ENCODE measurements at regions of chr21 and their contacts with region 1.

Region 1: GRCh38 chr21:25790122-25790877 is 55.5 kb downstream of the GABPA start:
- DNase-seq: peak; percentile 63
- H3K4me3 ChIP-seq: peak overlapping the region in 2 of 3 experiments; percentile 27 to 28
- H3K27ac ChIP-seq: no peak overlapping the region
- H3K4me1 ChIP-seq: no peaks in the 10 kb centered on the region
- H3K27me3 ChIP-seq: peaks cover 2 to 3% of the 10 kb centered on the region in 2 experiments
- CTCF ChIP-seq: peak; percentile 22 to 26
- POLR2A ChIP-seq: no peak

Region 2: DNA sequence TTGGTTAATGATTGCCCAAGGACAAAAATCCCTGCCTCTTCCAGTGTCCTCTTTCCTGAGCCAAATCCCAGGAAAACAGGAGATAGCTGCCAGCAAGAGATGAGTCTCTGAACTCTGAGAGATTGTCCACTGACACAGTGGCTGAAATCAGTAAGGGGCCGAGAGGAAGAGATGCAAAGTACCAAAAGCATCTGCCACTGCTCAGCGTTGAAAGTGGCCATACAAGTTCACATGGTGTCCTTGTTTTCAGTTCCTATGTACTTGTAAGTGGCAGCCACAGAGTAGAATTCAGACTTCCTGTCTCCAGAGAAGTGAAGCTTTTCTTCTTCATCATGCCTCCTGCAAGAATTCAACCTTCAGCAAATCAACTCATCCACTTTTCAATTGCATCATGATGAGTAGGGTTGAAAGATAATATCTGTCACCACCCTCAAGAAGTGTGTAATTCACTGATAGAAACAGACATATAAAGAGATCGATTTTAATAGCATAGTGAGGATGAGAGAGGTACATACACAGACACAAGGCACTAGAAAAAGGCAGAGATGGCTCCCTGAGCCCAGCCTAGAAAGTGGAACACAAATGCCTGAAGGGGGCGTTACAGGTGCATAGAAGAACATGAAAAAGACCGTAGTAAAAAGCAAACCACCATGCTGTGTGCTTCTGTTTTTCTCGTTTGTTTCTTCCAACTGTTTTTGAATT is 368.8 kb before region 1 on chr21:
- CTCF ChIA-PET with region 1: no interaction called
- POLR2A ChIA-PET with region 1: no interaction called
- dilution Hi-C with region 1: no loop called
- intact Hi-C with region 1: loop called (anchors 10 kb)
- DNase-seq: peak; percentile 60
- H3K4me3 ChIP-seq: no peak overlapping the region
- H3K27ac ChIP-seq: no peak overlapping the region
- H3K4me1 ChIP-seq: no peaks in the 10 kb centered on the region
- H3K27me3 ChIP-seq: no peaks in the 10 kb centered on the region
- CTCF ChIP-seq: peak; percentile 29 to 59
- POLR2A ChIP-seq: no peak

Region 3: DNA sequence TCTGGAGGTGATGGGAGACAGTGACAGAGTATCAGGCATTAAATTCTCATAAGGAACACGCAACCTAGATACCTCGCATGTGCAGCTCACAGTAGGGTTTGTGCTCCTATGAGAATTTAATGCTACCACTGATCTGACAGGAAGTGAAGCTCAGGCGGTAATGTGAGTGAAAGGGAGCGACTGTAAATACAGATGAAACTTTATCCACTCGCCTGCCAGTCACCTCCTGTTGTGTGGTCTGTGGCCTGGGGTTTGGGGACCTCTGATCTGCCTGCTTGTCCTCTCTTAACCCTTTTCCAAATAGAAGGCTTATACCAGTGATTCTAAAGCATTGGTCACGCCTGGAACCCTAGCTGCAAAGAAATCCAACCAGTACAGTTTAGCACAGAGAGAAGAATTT is 40.2 kb before region 1 on chr21:
- CTCF ChIA-PET with region 1: no interaction called
- POLR2A ChIA-PET with region 1: no interaction called
- dilution Hi-C with region 1: no loop called
- intact Hi-C with region 1: no loop called
- DNase-seq: no peak
- H3K4me3 ChIP-seq: no peak overlapping the region
- H3K27ac ChIP-seq: no peak overlapping the region
- H3K4me1 ChIP-seq: no peaks in the 10 kb centered on the region
- H3K27me3 ChIP-seq: no peaks in the 10 kb centered on the region
- CTCF ChIP-seq: no peak
- POLR2A ChIP-seq: no peak

Region 4: GRCh38 chr21:25776440-25776839 is 13.9 kb before region 1 on chr21:
- CTCF ChIA-PET with region 1: interaction called, 10 read pairs
- POLR2A ChIA-PET with region 1: no interaction called
- dilution Hi-C with region 1: no loop called
- intact Hi-C with region 1: no loop called
- DNase-seq: no peak
- H3K4me3 ChIP-seq: no peak overlapping the region
- H3K27ac ChIP-seq: no peak overlapping the region
- H3K4me1 ChIP-seq: no peaks in the 10 kb centered on the region
- H3K27me3 ChIP-seq: no peaks in the 10 kb centered on the region
- CTCF ChIP-seq: no peak
- POLR2A ChIP-seq: no peak

Region 5: GRCh38 chr21:25801217-25802014 is 11.1 kb after region 1 on chr21:
- CTCF ChIA-PET with region 1: interaction called, 30 read pairs
- POLR2A ChIA-PET with region 1: no interaction called
- dilution Hi-C with region 1: no loop called
- intact Hi-C with region 1: no loop called
- DNase-seq: peak; percentile 82
- H3K4me3 ChIP-seq: no peak overlapping the region
- H3K27ac ChIP-seq: no peak overlapping the region
- H3K4me1 ChIP-seq: no peaks in the 10 kb centered on the region
- H3K27me3 ChIP-seq: peaks cover 6 to 17% of the 10 kb centered on the region in 2 experiments
- CTCF ChIP-seq: peak; percentile 99 to 100
- POLR2A ChIP-seq: no peak

Region 6: DNA sequence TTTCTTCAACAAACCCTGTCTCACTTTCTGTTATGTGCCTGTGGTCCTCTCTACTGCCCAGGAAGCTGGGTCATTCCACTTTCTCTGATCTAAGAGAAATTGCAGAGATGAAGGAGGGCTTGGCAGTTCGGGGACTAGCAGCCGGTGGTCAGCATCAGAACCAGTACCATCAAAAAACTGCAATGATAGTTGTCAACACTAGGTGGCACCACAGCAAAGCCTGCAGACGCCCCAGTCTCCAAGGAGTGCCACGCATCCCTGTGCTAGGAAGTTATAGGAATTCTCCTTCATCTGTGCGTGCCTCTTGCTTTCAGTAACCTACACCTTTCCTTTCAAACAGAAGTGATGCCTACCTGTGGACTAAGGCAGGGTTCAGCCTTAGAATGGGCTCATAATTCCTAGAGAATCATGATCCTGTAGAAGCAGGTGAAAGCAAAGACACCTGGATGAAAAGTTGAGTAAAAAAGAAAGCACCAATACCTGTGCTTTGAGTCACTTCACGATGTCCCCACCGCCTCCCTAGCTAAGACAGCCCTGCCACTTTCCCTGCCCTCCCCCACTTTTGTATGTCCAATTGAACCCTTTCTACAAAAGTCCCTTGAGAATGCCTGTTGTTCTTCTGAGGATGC is 925.7 kb after region 1 on chr21:
- CTCF ChIA-PET with region 1: interaction called, 9 read pairs
- POLR2A ChIA-PET with region 1: no interaction called
- dilution Hi-C with region 1: no loop called
- intact Hi-C with region 1: loop called (anchors 2 kb)
- DNase-seq: peak; percentile 55
- H3K4me3 ChIP-seq: no peak overlapping the region
- H3K27ac ChIP-seq: no peak overlapping the region
- H3K4me1 ChIP-seq: no peaks in the 10 kb centered on the region
- H3K27me3 ChIP-seq: no peaks in the 10 kb centered on the region
- CTCF ChIP-seq: peak; percentile 81 to 89
- POLR2A ChIP-seq: no peak

Measured in endothelial cell of umbilical vein (primary cell).